ENCODE measurements at regions of chrX and their contacts with region 1.

Region 1: GRCh38 chrX:145405009-145405408 is 157.7 kb downstream of the SPANXN1 start:
- DNase-seq: peak; percentile 70
- H3K4me3 Mint-ChIP-seq: no peak overlapping the region
- H3K27ac Mint-ChIP-seq: no peak overlapping the region
- H3K4me1 Mint-ChIP-seq: no peaks in the 10 kb centered on the region
- H3K27me3 Mint-ChIP-seq: no peaks in the 10 kb centered on the region
- CTCF ChIP-seq: peak; percentile 68

Region 2: DNA sequence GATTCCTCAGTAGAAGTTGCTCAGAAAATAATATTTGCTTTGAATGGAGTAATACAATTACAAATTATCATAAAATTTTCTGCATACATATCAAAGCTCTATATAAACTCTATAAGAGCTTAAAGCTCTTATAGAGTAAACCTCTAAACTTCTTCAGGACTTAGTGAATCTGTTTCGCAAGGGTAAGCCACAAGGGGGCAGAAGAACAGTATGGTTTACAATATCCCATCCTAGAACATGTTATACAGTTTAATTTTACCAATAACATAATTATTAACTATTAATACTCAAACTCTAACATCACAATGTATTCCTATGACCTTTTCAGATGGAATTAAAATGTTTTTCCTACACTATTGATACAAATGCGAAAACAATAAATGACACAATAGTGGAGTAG is 191.5 kb before region 1 on chrX:
- CTCF ChIA-PET with region 1: interaction called, 3 read pairs
- POLR2A ChIA-PET with region 1: no interaction called
- intact Hi-C with region 1: loop called (anchors 10 kb)
- DNase-seq: peak; percentile 65
- H3K4me3 Mint-ChIP-seq: no peak overlapping the region
- H3K27ac Mint-ChIP-seq: no peak overlapping the region
- H3K4me1 Mint-ChIP-seq: no peaks in the 10 kb centered on the region
- H3K27me3 Mint-ChIP-seq: no peaks in the 10 kb centered on the region
- CTCF ChIP-seq: peak; percentile 49

Region 3: GRCh38 chrX:145654486-145654885 is 249.5 kb after region 1 on chrX:
- CTCF ChIA-PET with region 1: no interaction called
- POLR2A ChIA-PET with region 1: no interaction called
- intact Hi-C with region 1: no loop called
- DNase-seq: no peak
- H3K4me3 Mint-ChIP-seq: no peak overlapping the region
- H3K27ac Mint-ChIP-seq: no peak overlapping the region
- H3K4me1 Mint-ChIP-seq: no peaks in the 10 kb centered on the region
- H3K27me3 Mint-ChIP-seq: peaks cover 29% of the 10 kb centered on the region
- CTCF ChIP-seq: no peak

Region 4: DNA sequence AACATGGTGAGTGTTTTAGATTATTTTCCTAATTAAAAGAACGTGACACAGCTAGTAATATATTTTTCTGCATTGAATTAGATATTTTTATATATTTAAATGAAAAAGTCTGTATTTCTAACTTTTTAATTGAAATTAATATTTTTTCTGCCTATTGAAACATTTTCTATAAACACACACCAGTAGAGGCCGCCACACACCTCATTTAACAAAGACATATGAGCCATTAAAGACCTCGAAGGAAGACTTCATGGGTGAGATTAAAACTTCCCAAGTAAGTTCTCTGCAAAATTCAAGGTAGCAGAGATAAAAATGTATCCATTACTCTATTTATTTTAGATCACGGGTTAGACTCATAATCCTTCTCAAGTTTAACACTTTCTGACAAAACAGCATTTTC is 420.9 kb after region 1 on chrX:
- CTCF ChIA-PET with region 1: no interaction called
- POLR2A ChIA-PET with region 1: no interaction called
- intact Hi-C with region 1: loop called (anchors 1 kb)
- DNase-seq: peak; percentile 65
- H3K4me3 Mint-ChIP-seq: no peak overlapping the region
- H3K27ac Mint-ChIP-seq: no peak overlapping the region
- H3K4me1 Mint-ChIP-seq: no peaks in the 10 kb centered on the region
- H3K27me3 Mint-ChIP-seq: no peaks in the 10 kb centered on the region
- CTCF ChIP-seq: peak; percentile 32

Region 5: GRCh38 chrX:145910017-145910416 is 505.0 kb after region 1 on chrX:
- CTCF ChIA-PET with region 1: no interaction called
- POLR2A ChIA-PET with region 1: no interaction called
- intact Hi-C with region 1: loop called (anchors 10 kb)
- DNase-seq: peak; percentile 14
- H3K4me3 Mint-ChIP-seq: no peak overlapping the region
- H3K27ac Mint-ChIP-seq: no peak overlapping the region
- H3K4me1 Mint-ChIP-seq: no peaks in the 10 kb centered on the region
- H3K27me3 Mint-ChIP-seq: no peaks in the 10 kb centered on the region
- CTCF ChIP-seq: no peak

Region 6: DNA sequence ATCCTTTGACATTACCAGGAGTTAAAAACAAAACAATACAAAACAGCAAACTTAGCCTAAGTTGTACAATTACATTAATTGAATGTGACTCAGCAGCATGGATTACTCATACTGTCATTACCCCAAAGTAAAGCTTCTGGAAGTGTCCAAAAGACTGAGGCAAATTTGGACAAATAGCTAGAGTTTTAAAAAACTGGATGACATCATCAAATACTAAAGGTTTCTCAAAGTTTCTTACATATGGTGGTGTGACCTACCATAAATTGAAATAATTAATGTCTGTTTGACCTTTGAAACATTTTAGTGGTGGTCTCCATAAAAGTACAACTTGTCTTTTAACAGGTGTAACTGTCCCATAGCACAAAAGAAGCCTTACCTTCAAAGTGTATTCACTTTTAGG is 693.2 kb after region 1 on chrX:
- CTCF ChIA-PET with region 1: no interaction called
- POLR2A ChIA-PET with region 1: no interaction called
- intact Hi-C with region 1: no loop called
- DNase-seq: peak; percentile 12
- H3K4me3 Mint-ChIP-seq: no peak overlapping the region
- H3K27ac Mint-ChIP-seq: no peak overlapping the region
- H3K4me1 Mint-ChIP-seq: no peaks in the 10 kb centered on the region
- H3K27me3 Mint-ChIP-seq: no peaks in the 10 kb centered on the region
- CTCF ChIP-seq: no peak

Region 7: DNA sequence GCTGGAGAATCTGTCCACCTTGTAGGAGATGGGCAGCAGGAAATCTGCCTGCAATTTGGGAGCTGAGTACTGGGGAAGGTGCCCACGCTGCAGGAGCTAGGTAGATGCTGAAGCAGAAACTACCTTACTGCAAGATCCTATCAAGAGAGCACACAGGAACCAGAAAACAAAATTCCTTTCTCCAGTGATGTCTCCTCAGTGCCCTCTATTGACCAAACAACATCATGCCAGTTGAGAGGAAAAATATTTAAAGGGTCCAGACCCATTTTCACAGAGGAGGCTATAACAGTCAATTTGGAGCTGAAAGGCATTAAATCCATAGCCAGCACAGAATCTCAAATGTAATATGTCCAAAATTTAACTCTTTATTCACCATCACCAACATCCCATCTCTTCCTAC is 819.4 kb after region 1 on chrX:
- CTCF ChIA-PET with region 1: no interaction called
- POLR2A ChIA-PET with region 1: no interaction called
- intact Hi-C with region 1: loop called (anchors 10 kb)
- DNase-seq: peak; percentile 36
- H3K4me3 Mint-ChIP-seq: no peak overlapping the region
- H3K27ac Mint-ChIP-seq: no peak overlapping the region
- H3K4me1 Mint-ChIP-seq: no peaks in the 10 kb centered on the region
- H3K27me3 Mint-ChIP-seq: no peaks in the 10 kb centered on the region
- CTCF ChIP-seq: peak; percentile 49

Measured in MCF 10A (cell line).